Naive thymus-derived CD4-positive, alpha-beta T cell (primary cell): ENCODE measurements at regions of chr4 and their contacts with region 1.

Region 1: DNA sequence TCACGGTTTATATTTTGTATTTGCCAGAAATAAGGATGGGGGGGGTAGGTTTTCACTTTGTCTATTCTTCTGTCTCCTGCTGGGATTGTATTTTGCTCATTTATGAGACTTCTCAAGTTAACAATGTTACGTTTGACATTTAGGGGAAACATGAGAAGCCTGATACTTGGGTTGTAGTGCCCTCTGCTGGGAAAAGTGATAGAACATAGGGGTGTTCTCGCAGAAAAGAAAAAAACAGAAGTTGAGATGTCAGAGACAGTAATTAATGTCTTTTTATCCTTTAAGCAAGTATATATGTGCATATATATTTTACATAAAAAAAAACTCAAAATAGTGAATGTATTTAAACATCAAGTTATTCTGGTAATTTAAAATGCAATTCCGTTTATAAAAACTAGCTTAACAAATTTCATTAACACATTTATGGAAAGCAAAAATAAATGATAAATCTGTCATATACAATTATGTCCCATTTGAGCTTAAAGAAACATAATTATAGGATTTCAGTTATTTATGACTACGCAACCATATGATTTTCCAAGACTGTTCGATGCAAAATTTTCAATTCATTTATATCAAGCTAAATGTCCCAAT is 46.0 kb upstream of the TMPRSS11F start:
- DNase-seq: peak in 6 of 9 donors; percentile 17 to 31 (median 22)
- ATAC-seq: no peak
- H3K4me3 ChIP-seq: no peak overlapping the region
- H3K4me3 Mint-ChIP-seq: no peak overlapping the region
- H3K27ac ChIP-seq: no peak overlapping the region
- H3K27ac Mint-ChIP-seq: no peak overlapping the region
- H3K4me1 ChIP-seq: no peaks in the 10 kb centered on the region
- H3K4me1 Mint-ChIP-seq: peaks cover 0 to 4% (median 0%) of the 10 kb centered on the region in 7 donors
- H3K27me3 ChIP-seq: no peaks in the 10 kb centered on the region
- H3K27me3 Mint-ChIP-seq: peaks cover 5 to 20% (median 12%) of the 10 kb centered on the region in 5 donors

Region 2: GRCh38 chr4:67087897-67088296 is 1087.8 kb before region 1 on chr4:
- CTCF ChIA-PET with region 1: no interaction called
- POLR2A ChIA-PET with region 1: no interaction called
- intact Hi-C with region 1: loop called in 1 of 2 experiments (anchors 5 kb)
- DNase-seq: peak in 6 of 9 donors; percentile 2 to 24 (median 12)
- ATAC-seq: no peak
- H3K4me3 ChIP-seq: no peak overlapping the region
- H3K4me3 Mint-ChIP-seq: no peak overlapping the region
- H3K27ac ChIP-seq: no peak overlapping the region
- H3K27ac Mint-ChIP-seq: no peak overlapping the region
- H3K4me1 ChIP-seq: no peaks in the 10 kb centered on the region
- H3K4me1 Mint-ChIP-seq: no peaks in the 10 kb centered on the region
- H3K27me3 ChIP-seq: no peaks in the 10 kb centered on the region
- H3K27me3 Mint-ChIP-seq: no peaks in the 10 kb centered on the region

Region 3: GRCh38 chr4:67393699-67394281 is 781.9 kb before region 1 on chr4:
- CTCF ChIA-PET with region 1: no interaction called
- POLR2A ChIA-PET with region 1: no interaction called
- intact Hi-C with region 1: loop called in 1 of 2 experiments (anchors 5 kb)
- DNase-seq: peak in 5 of 9 donors; percentile 5 to 29 (median 15)
- ATAC-seq: no peak
- H3K4me3 ChIP-seq: no peak overlapping the region
- H3K4me3 Mint-ChIP-seq: no peak overlapping the region
- H3K27ac ChIP-seq: no peak overlapping the region
- H3K27ac Mint-ChIP-seq: no peak overlapping the region
- H3K4me1 ChIP-seq: no peaks in the 10 kb centered on the region
- H3K4me1 Mint-ChIP-seq: no peaks in the 10 kb centered on the region
- H3K27me3 ChIP-seq: no peaks in the 10 kb centered on the region
- H3K27me3 Mint-ChIP-seq: peaks cover 8 to 18% (median 16%) of the 10 kb centered on the region in 5 donors

Region 4: GRCh38 chr4:67871867-67872266 is 303.8 kb before region 1 on chr4:
- CTCF ChIA-PET with region 1: no interaction called
- POLR2A ChIA-PET with region 1: no interaction called
- intact Hi-C with region 1: loop called in 1 of 2 experiments (anchors 1 kb)
- DNase-seq: peak in 1 of 9 donors; percentile 2
- ATAC-seq: peak; percentile 60
- H3K4me3 ChIP-seq: no peak overlapping the region
- H3K4me3 Mint-ChIP-seq: no peak overlapping the region
- H3K27ac ChIP-seq: no peak overlapping the region
- H3K27ac Mint-ChIP-seq: no peak overlapping the region
- H3K4me1 ChIP-seq: no peaks in the 10 kb centered on the region
- H3K4me1 Mint-ChIP-seq: no peaks in the 10 kb centered on the region
- H3K27me3 ChIP-seq: no peaks in the 10 kb centered on the region
- H3K27me3 Mint-ChIP-seq: peaks cover 0 to 16% (median 7%) of the 10 kb centered on the region in 5 donors

Region 5: GRCh38 chr4:67988991-67989390 is 186.7 kb before region 1 on chr4:
- CTCF ChIA-PET with region 1: no interaction called
- POLR2A ChIA-PET with region 1: no interaction called
- intact Hi-C with region 1: loop called in 1 of 2 experiments (anchors 1 kb)
- DNase-seq: no peak
- ATAC-seq: no peak
- H3K4me3 ChIP-seq: no peak overlapping the region
- H3K4me3 Mint-ChIP-seq: no peak overlapping the region
- H3K27ac ChIP-seq: no peak overlapping the region
- H3K27ac Mint-ChIP-seq: no peak overlapping the region
- H3K4me1 ChIP-seq: no peaks in the 10 kb centered on the region
- H3K4me1 Mint-ChIP-seq: peaks cover 0 to 12% (median 0%) of the 10 kb centered on the region in 7 donors
- H3K27me3 ChIP-seq: no peaks in the 10 kb centered on the region
- H3K27me3 Mint-ChIP-seq: peaks cover 5 to 13% (median 12%) of the 10 kb centered on the region in 5 donors